PC-9 (cell line): ENCODE measurements at regions of chr4 and their contacts with region 1.

Region 1: GRCh38 chr4:40238008-40238699 is 41.3 kb downstream of the RHOH start:
- DNase-seq: no peak
- H3K4me3 ChIP-seq: no peak overlapping the region
- H3K27ac ChIP-seq: no peak overlapping the region
- H3K4me1 ChIP-seq: no peaks in the 10 kb centered on the region
- H3K27me3 ChIP-seq: no peaks in the 10 kb centered on the region
- CTCF ChIP-seq: no peak

Region 2: GRCh38 chr4:40099010-40099409 is 139.1 kb before region 1 on chr4:
- CTCF ChIA-PET with region 1: no interaction called
- POLR2A ChIA-PET with region 1: no interaction called
- intact Hi-C with region 1: no loop called
- DNase-seq: no peak
- H3K4me3 ChIP-seq: no peak overlapping the region
- H3K27ac ChIP-seq: no peak overlapping the region
- H3K4me1 ChIP-seq: no peaks in the 10 kb centered on the region
- H3K27me3 ChIP-seq: no peaks in the 10 kb centered on the region
- CTCF ChIP-seq: no peak

Region 3: GRCh38 chr4:40170588-40170987 is 67.6 kb before region 1 on chr4:
- CTCF ChIA-PET with region 1: no interaction called
- POLR2A ChIA-PET with region 1: no interaction called
- intact Hi-C with region 1: no loop called
- DNase-seq: no peak
- H3K4me3 ChIP-seq: no peak overlapping the region
- H3K27ac ChIP-seq: no peak overlapping the region
- H3K4me1 ChIP-seq: no peaks in the 10 kb centered on the region
- H3K27me3 ChIP-seq: no peaks in the 10 kb centered on the region
- CTCF ChIP-seq: no peak

Region 4: DNA sequence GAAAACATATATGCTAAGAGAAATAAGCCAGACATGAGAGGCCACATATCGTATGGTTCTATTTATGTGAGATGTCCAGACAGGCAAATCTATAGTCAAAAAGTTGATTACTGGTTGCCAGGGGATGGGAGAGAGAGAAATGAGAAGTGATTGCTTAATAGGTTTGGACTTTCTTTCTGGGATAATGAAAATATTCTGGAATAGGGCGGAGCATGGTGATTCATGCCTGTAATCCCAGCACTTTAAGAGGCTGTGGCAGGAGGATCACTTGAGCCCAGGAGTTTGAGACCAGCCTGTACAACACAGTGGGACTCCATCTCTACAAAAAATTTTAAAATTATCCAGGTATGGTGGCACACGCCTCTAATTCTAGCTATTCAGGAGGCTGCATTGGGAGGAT is 369.1 kb after region 1 on chr4:
- CTCF ChIA-PET with region 1: interaction called, 11 read pairs
- POLR2A ChIA-PET with region 1: no interaction called
- intact Hi-C with region 1: no loop called
- DNase-seq: no peak
- H3K4me3 ChIP-seq: no peak overlapping the region
- H3K27ac ChIP-seq: 0 out of 2 replicates have a peak overlapping the region, but pooled peaks have one; percentile 6
- H3K4me1 ChIP-seq: peaks cover 7% of the 10 kb centered on the region
- H3K27me3 ChIP-seq: no peaks in the 10 kb centered on the region
- CTCF ChIP-seq: no peak

Region 5: DNA sequence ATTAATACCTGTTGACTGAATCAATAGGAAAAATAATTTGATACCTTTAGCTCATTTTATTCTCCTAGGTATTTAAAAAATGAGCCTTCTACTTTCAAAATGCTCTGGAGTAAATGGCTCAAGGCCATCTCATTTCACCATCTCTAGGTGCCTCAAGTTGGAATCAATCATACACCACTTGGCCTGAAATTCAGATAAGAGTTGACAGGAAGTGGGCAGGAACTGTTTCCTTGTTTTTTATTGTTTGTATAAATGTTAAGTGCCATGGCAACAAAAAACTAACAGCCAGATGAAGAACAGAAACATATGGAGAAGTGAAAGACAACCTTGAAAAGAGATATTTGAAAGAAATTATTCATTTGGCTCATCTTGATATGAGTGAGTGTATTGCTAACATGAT is 1312.2 kb after region 1 on chr4:
- CTCF ChIA-PET with region 1: no interaction called
- POLR2A ChIA-PET with region 1: interaction called, 19 read pairs
- intact Hi-C with region 1: no loop called
- DNase-seq: peak in 1 of 2 experiments; percentile 79
- H3K4me3 ChIP-seq: no peak overlapping the region
- H3K27ac ChIP-seq: peak overlapping the region; percentile 38; the same call in 1 of the 2 replicates
- H3K4me1 ChIP-seq: peaks cover 16% of the 10 kb centered on the region
- H3K27me3 ChIP-seq: no peaks in the 10 kb centered on the region
- CTCF ChIP-seq: no peak